K562 (cell line): ENCODE measurements at regions of chr2 and their contacts with region 1.

Region 1: DNA sequence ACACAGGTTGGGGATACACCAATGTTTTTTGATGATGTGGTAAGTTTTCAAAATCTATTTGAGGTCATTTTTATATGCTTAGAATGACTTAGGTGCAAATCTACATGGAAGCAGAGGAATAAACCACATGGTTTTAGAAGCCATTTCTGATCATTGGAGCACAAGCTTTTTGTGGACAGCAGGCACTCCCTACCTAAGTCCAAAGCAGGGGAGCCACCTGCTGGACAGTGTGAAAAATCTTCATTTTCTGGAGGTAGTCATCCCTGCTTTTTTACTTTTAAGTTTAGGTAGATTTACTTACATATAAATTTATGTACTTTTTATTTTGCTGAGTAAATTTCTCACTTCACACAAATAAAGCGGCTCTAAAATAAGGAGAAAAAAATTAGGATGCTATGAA is 323.2 kb downstream of the PLCL1 start:
- DNase-seq: peak; percentile 28 to 72 (median 46)
- ATAC-seq: peak; percentile 87
- H3K4me3 ChIP-seq: no peak overlapping the region
- H3K27ac ChIP-seq: no peak overlapping the region
- H3K4me1 ChIP-seq: peaks cover 0 to 3% of the 10 kb centered on the region in 2 experiments; a peak in 2 of 5 replicates
- H3K27me3 ChIP-seq: no peaks in the 10 kb centered on the region
- CTCF ChIP-seq: peak; percentile 52 to 60 (median 53)
- EP300 ChIP-seq: no peak
- POLR2A ChIP-seq: no peak
- RAD21 ChIP-seq: peak; percentile 42 to 75

Region 2: GRCh38 chr2:198053776-198054698 is 73.6 kb before region 1 on chr2:
- CTCF ChIA-PET with region 1: no interaction called
- POLR2A ChIA-PET with region 1: no interaction called
- in situ Hi-C with region 1: no loop called
- intact Hi-C with region 1: loop called (anchors 5 kb)
- DNase-seq: peak; percentile 21 to 72 (median 48)
- ATAC-seq: peak; percentile 96
- H3K4me3 ChIP-seq: no peak overlapping the region
- H3K27ac ChIP-seq: no peak overlapping the region
- H3K4me1 ChIP-seq: peaks cover 3 to 8% of the 10 kb centered on the region in 2 experiments; a peak in 4 of 5 replicates
- H3K27me3 ChIP-seq: no peaks in the 10 kb centered on the region
- CTCF ChIP-seq: peak; percentile 59 to 66 (median 61)
- EP300 ChIP-seq: no peak
- POLR2A ChIP-seq: no peak
- RAD21 ChIP-seq: peak; percentile 62 to 76